Heart left ventricle (tissue), 16 donors: ENCODE measurements at regions of chr2 and their contacts with region 1.

Region 1: GRCh38 chr2:50143822-50144575 is 887.9 kb downstream of the NRXN1 start:
- DNase-seq: peak in 1 of 5 donors; percentile 10
- ATAC-seq: peak in 3 of 4 donors; percentile 78 to 89 (median 80)
- H3K4me3 ChIP-seq: peak overlapping the region in 10 of 12 donors; percentile 8 to 57 (median 40)
- H3K27ac ChIP-seq: peak overlapping the region in 4 of 12 donors; percentile 28 to 47 (median 40)
- H3K4me1 ChIP-seq: peaks cover 0 to 4% (median 0%) of the 10 kb centered on the region in 12 donors
- H3K27me3 ChIP-seq: no peaks in the 10 kb centered on the region
- CTCF ChIP-seq: peak in 11 of 12 donors; percentile 41 to 70 (median 61)
- POLR2A ChIP-seq: no peak

Region 2: DNA sequence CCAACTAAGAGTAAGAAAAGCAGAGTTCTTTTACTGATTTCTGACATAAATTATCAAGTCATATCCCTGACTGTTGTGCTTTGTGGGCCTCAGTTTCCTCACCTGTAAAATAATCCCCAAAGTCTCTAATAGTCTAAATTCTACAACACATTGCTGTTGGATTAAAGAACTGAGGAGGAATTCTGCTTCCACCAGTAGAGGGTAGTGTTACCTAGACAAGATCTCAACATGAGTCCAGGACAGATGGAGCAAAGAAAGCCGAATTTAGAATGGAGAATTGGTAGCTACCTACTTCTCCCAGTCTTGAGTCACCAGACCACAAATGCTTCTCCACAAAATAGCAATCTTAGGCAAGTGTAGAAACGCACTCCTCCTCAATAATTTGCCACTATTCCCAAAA is 527.2 kb before region 1 on chr2:
- intact Hi-C with region 1: loop called in 3 of 10 experiments (anchors 5 to 10 kb)
- DNase-seq: no peak
- ATAC-seq: peak in 1 of 4 donors; percentile 36
- H3K4me3 ChIP-seq: no peak overlapping the region
- H3K27ac ChIP-seq: no peak overlapping the region
- H3K4me1 ChIP-seq: no peaks in the 10 kb centered on the region
- H3K27me3 ChIP-seq: no peaks in the 10 kb centered on the region
- CTCF ChIP-seq: peak in 10 of 12 donors; percentile 16 to 57 (median 42)
- POLR2A ChIP-seq: no peak

Region 3: DNA sequence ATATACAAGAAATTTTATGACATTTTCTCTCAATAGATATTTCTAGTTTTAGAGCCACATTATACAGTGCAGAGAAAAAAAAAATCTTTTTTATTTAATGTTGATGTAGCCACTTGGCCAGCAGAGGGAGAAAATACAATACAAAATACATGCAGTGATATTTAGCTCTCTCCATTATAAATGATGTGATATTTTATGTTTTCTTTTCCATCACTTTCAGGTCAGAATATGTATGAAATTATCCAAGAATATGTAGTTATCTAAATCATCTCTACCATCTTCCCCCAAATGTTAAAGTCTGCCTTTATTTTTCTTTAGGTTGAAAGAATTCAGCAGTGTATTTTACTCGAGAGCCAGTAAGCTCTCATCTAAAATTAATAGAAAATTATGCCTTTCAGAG is 456.1 kb before region 1 on chr2:
- intact Hi-C with region 1: loop called (anchors 2 to 10 kb)
- DNase-seq: no peak
- ATAC-seq: no peak
- H3K4me3 ChIP-seq: no peak overlapping the region
- H3K27ac ChIP-seq: no peak overlapping the region
- H3K4me1 ChIP-seq: no peaks in the 10 kb centered on the region
- H3K27me3 ChIP-seq: no peaks in the 10 kb centered on the region
- CTCF ChIP-seq: peak in 10 of 12 donors; percentile 25 to 52 (median 40)
- POLR2A ChIP-seq: no peak

Region 4: GRCh38 chr2:49770919-49771318 is 373.1 kb before region 1 on chr2:
- intact Hi-C with region 1: loop called (anchors 2 to 10 kb)
- DNase-seq: peak in 4 of 5 donors; percentile 11 to 59 (median 45)
- ATAC-seq: peak; percentile 73 to 88 (median 84)
- H3K4me3 ChIP-seq: no peak overlapping the region
- H3K27ac ChIP-seq: no peak overlapping the region
- H3K4me1 ChIP-seq: no peaks in the 10 kb centered on the region
- H3K27me3 ChIP-seq: no peaks in the 10 kb centered on the region
- CTCF ChIP-seq: peak in 11 of 12 donors; percentile 13 to 58 (median 42)
- POLR2A ChIP-seq: no peak

Region 5: GRCh38 chr2:50126845-50127244 is 17.2 kb before region 1 on chr2:
- intact Hi-C with region 1: no loop called
- DNase-seq: no peak
- ATAC-seq: no peak
- H3K4me3 ChIP-seq: no peak overlapping the region
- H3K27ac ChIP-seq: no peak overlapping the region
- H3K4me1 ChIP-seq: no peaks in the 10 kb centered on the region
- H3K27me3 ChIP-seq: no peaks in the 10 kb centered on the region
- CTCF ChIP-seq: no peak
- POLR2A ChIP-seq: no peak